ENCODE measurements at regions of chr7 and their contacts with region 1.

Region 1: GRCh38 chr7:1044191-1045068 is at the start of gene GPR146:
- DNase-seq: peak; percentile 82 to 95 (median 90)
- ATAC-seq: peak; percentile 80
- H3K4me3 ChIP-seq: peak within 1 kb of the TSS; percentile 50
- H3K4me3 Mint-ChIP-seq: peak within 1 kb of the TSS; percentile 91
- H3K27ac ChIP-seq: peak within 1 kb of the TSS in 1 of 2 donors; percentile 56
- H3K27ac Mint-ChIP-seq: peak within 1 kb of the TSS; percentile 79
- H3K4me1 ChIP-seq: peaks cover 67% of the 10 kb centered on the region
- H3K4me1 Mint-ChIP-seq: peaks cover 60% of the 10 kb centered on the region
- H3K27me3 ChIP-seq: no peaks in the 10 kb centered on the region
- H3K27me3 Mint-ChIP-seq: no peaks in the 10 kb centered on the region
- CTCF ChIP-seq: peak; percentile 66
- total RNA-seq, gene GPR146: 9.9 to 13.7 TPM

Region 2: GRCh38 chr7:816300-816750 is 228.1 kb before region 1 on chr7:
- CTCF ChIA-PET with region 1: no interaction called
- POLR2A ChIA-PET with region 1: no interaction called
- intact Hi-C with region 1: loop called in 1 of 2 experiments (anchors 10 kb)
- DNase-seq: peak; percentile 95 to 99 (median 97)
- ATAC-seq: peak; percentile 94
- H3K4me3 ChIP-seq: peak overlapping the region; percentile 64
- H3K4me3 Mint-ChIP-seq: peak overlapping the region; percentile 85
- H3K27ac ChIP-seq: no peak overlapping the region
- H3K27ac Mint-ChIP-seq: peak overlapping the region; percentile 85
- H3K4me1 ChIP-seq: peaks cover 50% of the 10 kb centered on the region
- H3K4me1 Mint-ChIP-seq: peaks cover 67% of the 10 kb centered on the region
- H3K27me3 ChIP-seq: no peaks in the 10 kb centered on the region
- H3K27me3 Mint-ChIP-seq: no peaks in the 10 kb centered on the region
- CTCF ChIP-seq: no peak

Region 3: DNA sequence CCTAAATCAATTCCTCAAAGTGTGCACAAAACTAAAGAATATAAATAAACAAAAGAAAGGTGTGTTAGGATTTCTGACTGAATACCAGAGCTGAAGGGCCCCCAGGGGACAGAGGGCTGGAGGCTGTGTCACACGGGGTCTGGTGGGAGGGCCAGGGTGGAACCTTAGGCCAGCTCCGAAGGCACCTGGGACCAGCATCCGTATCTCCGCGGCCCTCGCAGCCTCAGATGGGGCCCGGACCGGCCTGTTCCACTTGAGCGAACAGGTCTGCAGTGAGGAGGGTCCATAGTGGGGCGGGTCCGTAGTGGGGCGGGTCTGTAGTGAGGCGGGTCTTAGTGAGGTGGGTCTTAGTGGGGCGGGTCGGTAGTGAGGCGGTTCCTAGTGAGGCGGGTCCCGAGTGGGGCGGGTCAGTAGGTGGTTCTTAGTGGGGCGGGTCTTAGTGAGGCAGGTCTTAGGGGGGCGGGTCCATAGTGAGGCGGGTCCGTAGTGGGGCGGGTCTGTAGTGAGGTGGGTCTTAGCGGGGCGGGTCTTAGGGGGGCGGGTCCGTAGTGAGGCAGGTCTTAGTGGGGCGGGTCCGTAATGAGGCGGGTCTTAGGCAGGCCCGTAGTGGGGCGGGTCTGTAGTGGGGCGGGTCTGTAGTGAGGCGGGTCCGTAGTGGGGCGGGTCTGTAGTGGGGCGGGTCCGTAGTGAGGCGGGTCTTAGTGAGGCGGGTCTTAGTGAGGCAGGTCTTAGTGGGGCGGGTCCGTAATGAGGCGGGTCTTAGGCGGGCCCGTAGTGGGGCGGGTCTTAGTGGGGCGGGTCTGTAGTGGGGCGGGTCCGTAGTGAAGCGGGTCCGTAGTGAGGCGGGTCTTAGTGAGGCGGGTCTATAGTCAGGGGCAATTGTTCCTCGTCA is 15.0 kb after region 1 on chr7:
- CTCF ChIA-PET with region 1: interaction called, 4 read pairs
- POLR2A ChIA-PET with region 1: interaction called, 11 read pairs
- intact Hi-C with region 1: no loop called
- DNase-seq: peak in 3 of 14 experiments; percentile 15 to 64 (median 37)
- ATAC-seq: peak; percentile 45
- H3K4me3 ChIP-seq: no peak overlapping the region
- H3K4me3 Mint-ChIP-seq: peak overlapping the region; percentile 69
- H3K27ac ChIP-seq: no peak overlapping the region
- H3K27ac Mint-ChIP-seq: peak overlapping the region; percentile 72
- H3K4me1 ChIP-seq: peaks cover 41% of the 10 kb centered on the region
- H3K4me1 Mint-ChIP-seq: peaks cover 36% of the 10 kb centered on the region
- H3K27me3 ChIP-seq: no peaks in the 10 kb centered on the region
- H3K27me3 Mint-ChIP-seq: no peaks in the 10 kb centered on the region
- CTCF ChIP-seq: no peak

Region 4: DNA sequence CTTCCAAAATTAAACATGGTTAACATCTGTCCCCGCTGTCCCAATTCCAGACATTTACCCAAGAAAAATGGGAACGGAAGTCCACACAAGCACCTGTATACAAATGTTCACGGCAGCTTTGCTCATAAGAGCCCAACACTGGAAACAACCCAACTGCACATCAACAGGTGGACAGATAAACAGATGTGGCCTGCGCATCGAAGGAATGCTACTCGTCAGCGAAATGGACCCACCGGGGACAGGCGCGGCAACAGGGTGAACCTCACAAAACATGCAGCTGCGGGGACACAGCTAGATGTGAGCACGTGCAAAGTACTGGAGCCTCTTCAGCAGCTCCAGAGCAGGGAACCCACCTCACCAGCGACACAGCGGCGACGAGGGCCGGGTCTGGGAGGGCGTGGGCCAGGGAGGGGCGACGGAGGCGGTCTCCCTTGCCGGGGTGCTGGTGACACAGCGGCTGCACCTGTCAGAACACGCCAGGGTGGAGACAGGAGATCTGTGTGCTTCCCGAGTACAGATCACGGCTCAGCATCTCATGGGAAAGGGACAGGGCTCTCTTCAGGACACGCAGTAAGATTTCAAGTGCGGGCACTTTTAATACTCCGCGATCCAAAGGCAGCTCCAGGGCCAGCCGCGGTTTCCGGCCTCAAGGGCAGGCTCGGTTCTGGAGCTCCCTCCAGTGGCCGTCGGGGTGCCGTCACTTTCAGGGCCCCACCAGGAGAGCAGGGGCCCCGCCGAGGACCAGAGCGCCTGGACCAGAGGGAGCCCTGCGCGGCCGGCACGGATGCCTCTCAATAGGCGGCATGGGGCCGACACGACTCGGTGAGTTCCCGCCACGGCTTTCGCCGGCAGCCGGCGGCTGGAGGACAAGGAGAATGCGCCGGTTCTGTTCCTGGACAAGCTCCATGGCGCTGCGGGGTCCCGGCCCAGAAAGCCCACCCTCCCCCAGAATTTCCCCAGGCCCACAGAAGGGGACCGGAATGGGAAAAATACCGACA is 21.1 kb after region 1 on chr7:
- CTCF ChIA-PET with region 1: interaction called, 34 read pairs
- POLR2A ChIA-PET with region 1: interaction called, 10 read pairs
- intact Hi-C with region 1: no loop called
- DNase-seq: peak; percentile 73 to 90 (median 82)
- ATAC-seq: peak; percentile 97
- H3K4me3 ChIP-seq: peak overlapping the region; percentile 42
- H3K4me3 Mint-ChIP-seq: peak overlapping the region; percentile 66
- H3K27ac ChIP-seq: no peak overlapping the region
- H3K27ac Mint-ChIP-seq: no peak overlapping the region
- H3K4me1 ChIP-seq: peaks cover 18% of the 10 kb centered on the region
- H3K4me1 Mint-ChIP-seq: peaks cover 20% of the 10 kb centered on the region
- H3K27me3 ChIP-seq: peaks cover 0 to 4% of the 10 kb centered on the region in 2 experiments
- H3K27me3 Mint-ChIP-seq: no peaks in the 10 kb centered on the region
- CTCF ChIP-seq: peak; percentile 97